IMR-90 (cell line): ENCODE measurements at regions of chr20 and their contacts with region 1.

Region 1: GRCh38 chr20:56439771-56440291 is 27.8 kb downstream of the CASS4 start:
- DNase-seq: peak; percentile 100
- ATAC-seq: peak; percentile 86
- H3K4me3 ChIP-seq: no peak overlapping the region
- H3K27ac ChIP-seq: peak overlapping the region; percentile 99
- H3K4me1 ChIP-seq: peaks cover 35% of the 10 kb centered on the region
- H3K27me3 ChIP-seq: no peaks in the 10 kb centered on the region
- CTCF ChIP-seq: no peak
- POLR2A ChIP-seq: no peak; the same call in none of the 2 replicates
- RAD21 ChIP-seq: peak; percentile 14; the same call in 1 of the 2 replicates

Region 2: GRCh38 chr20:56385130-56385529 is 54.7 kb before region 1 on chr20:
- CTCF ChIA-PET with region 1: interaction called, 5 read pairs
- POLR2A ChIA-PET with region 1: interaction called, 13 read pairs
- dilution Hi-C with region 1: no loop called
- in situ Hi-C with region 1: no loop called
- intact Hi-C with region 1: no loop called
- DNase-seq: no peak
- ATAC-seq: no peak
- H3K4me3 ChIP-seq: no peak overlapping the region
- H3K27ac ChIP-seq: no peak overlapping the region
- H3K4me1 ChIP-seq: peaks cover 2% of the 10 kb centered on the region
- H3K27me3 ChIP-seq: no peaks in the 10 kb centered on the region
- CTCF ChIP-seq: no peak
- POLR2A ChIP-seq: no peak
- RAD21 ChIP-seq: no peak

Region 3: DNA sequence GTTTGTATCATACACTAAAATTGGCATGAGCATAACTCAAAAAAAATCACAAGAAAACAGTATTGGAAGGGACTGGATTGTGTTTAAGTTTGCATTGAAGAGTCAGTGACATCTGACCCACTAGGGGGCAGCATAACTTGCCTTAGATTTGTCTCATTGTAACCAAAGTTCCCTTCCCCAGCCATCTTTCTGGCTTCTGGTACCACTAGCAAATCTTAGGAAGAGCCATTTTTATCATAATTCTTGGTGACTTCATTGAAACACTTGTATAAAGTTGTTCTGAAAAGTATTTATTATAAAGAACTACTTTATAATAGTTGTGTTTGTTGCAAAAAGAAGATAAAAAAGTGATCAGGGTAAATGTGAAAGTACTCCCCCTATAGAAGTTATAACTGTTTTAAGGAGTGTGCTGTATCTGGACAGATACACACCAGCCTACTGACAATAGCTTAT is 39.7 kb before region 1 on chr20:
- CTCF ChIA-PET with region 1: interaction called, 3 read pairs
- POLR2A ChIA-PET with region 1: no interaction called
- dilution Hi-C with region 1: no loop called
- in situ Hi-C with region 1: no loop called
- intact Hi-C with region 1: loop called (anchors 1 kb)
- DNase-seq: peak; percentile 84
- ATAC-seq: peak; percentile 87
- H3K4me3 ChIP-seq: no peak overlapping the region
- H3K27ac ChIP-seq: no peak overlapping the region; the same call in 1 of the 2 replicates
- H3K4me1 ChIP-seq: no peaks in the 10 kb centered on the region
- H3K27me3 ChIP-seq: no peaks in the 10 kb centered on the region
- CTCF ChIP-seq: peak; percentile 77
- POLR2A ChIP-seq: no peak
- RAD21 ChIP-seq: peak; percentile 87

Region 4: GRCh38 chr20:56411759-56412472 is 27.9 kb before region 1 on chr20 and contains the start of gene CASS4:
- CTCF ChIA-PET with region 1: no interaction called
- POLR2A ChIA-PET with region 1: interaction called, 10 read pairs
- dilution Hi-C with region 1: no loop called
- in situ Hi-C with region 1: no loop called
- intact Hi-C with region 1: loop called (anchors 1 kb)
- DNase-seq: peak; percentile 89
- ATAC-seq: peak; percentile 47
- H3K4me3 ChIP-seq: peak within 1 kb of the TSS; percentile 47
- H3K27ac ChIP-seq: peak within 1 kb of the TSS; percentile 100
- H3K4me1 ChIP-seq: peaks cover 20% of the 10 kb centered on the region
- H3K27me3 ChIP-seq: no peaks in the 10 kb centered on the region
- CTCF ChIP-seq: no peak
- POLR2A ChIP-seq: peak; percentile 64; the same call in 1 of the 2 replicates
- RAD21 ChIP-seq: no peak
- total RNA-seq, gene CASS4: 25.8 and 26.1 TPM in 2 replicates

Region 5: DNA sequence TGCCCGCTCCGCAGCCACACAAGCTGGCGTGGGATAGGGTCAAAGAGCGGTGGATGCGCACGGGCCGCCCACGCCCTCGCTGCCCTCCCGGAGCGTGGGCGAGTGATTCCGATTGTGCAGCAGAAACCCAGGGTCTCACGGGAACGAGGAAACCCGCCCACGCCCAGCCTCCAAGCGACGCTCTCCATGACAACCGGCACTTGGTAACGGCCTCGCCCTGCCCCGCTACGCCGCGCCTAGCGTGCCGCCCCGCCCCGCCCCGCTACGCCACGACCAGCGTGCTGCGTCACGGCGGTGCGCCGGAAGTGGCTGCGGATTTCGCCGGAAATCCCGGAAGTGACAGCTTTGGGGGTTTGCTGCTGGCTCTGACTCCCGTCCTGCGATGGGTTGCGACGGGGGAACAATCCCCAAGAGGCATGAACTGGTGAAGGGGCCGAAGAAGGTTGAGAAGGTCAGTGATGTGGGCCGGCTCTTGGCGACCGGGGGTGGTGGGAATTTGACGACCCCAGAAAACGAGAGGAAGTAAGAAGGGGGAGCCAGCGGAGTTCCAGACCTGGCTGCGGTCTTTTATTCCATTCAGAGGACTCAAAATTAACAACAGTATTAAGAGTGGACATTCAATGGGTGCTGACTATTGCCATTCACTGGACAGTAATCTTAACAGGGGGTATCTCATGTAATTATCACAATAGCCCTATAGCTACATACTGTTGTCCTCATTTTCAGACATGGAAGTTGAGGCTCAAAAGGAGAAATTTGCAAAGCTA is 28.7 kb after region 1 on chr20 and contains the start of gene RTF2:
- CTCF ChIA-PET with region 1: interaction called, 3 read pairs
- POLR2A ChIA-PET with region 1: no interaction called
- dilution Hi-C with region 1: no loop called
- in situ Hi-C with region 1: no loop called
- intact Hi-C with region 1: loop called (anchors 1 kb)
- DNase-seq: peak; percentile 96
- ATAC-seq: peak; percentile 100
- H3K4me3 ChIP-seq: peak within 1 kb of the TSS; percentile 85
- H3K27ac ChIP-seq: peak within 1 kb of the TSS; percentile 84
- H3K4me1 ChIP-seq: 0 out of 2 replicates have a peak, but pooled peaks cover 2% of the 10 kb centered on the region
- H3K27me3 ChIP-seq: no peaks in the 10 kb centered on the region
- CTCF ChIP-seq: no peak
- POLR2A ChIP-seq: peak; percentile 75
- RAD21 ChIP-seq: peak; percentile 42; the same call in 1 of the 2 replicates
- total RNA-seq, gene RTF2: 109 and 118 TPM in 2 replicates

Region 6: DNA sequence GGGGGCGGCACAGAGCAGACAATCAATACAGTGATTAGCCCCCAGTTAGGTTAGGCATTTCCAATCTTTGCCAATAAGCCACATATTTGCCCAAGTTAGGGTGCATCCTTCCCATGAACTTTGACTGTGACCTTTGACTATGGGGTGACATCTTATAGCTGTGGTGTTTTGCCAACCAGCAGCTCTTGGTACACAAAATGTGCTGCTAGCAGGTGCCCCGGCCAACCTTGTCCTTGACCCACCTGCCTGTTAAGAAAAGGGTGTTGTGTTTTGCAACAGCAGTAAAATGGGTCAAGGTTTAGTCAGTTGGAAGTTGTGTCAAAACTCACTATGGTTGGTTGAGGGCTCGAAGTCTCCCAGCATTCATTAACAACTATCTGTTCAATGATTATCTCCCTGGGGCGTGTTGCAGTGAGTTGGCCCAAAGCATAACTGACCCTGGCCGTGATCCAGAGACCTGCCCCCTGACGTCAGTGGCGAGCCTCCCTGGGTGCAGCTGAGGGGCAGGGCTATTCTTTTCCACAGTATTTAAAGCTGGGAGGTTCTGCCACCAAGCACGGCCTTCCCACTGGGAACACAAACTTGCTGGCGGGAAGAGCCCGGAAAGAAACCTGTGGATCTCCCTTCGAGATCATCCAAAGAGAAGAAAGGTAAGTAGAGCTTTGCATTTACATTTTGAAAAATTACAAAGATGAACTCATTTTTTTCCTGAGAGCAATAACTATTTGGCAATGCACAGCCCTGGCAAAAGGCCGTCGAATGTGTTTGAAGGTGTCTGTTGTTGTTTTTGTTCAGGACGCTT is 1120.9 kb after region 1 on chr20 and contains the start of gene PCK1:
- CTCF ChIA-PET with region 1: no interaction called
- POLR2A ChIA-PET with region 1: no interaction called
- dilution Hi-C with region 1: no loop called
- in situ Hi-C with region 1: no loop called
- intact Hi-C with region 1: no loop called
- DNase-seq: peak; percentile 1
- ATAC-seq: no peak
- H3K4me3 ChIP-seq: no peak within 1 kb of the TSS
- H3K27ac ChIP-seq: no peak within 1 kb of the TSS
- H3K4me1 ChIP-seq: no peaks in the 10 kb centered on the region
- H3K27me3 ChIP-seq: peaks cover 7% of the 10 kb centered on the region
- CTCF ChIP-seq: no peak
- POLR2A ChIP-seq: no peak
- RAD21 ChIP-seq: no peak
- total RNA-seq, gene PCK1: not detected in 2 replicates